ENCODE measurements at regions of chr1 and their contacts with region 1.

Region 1: DNA sequence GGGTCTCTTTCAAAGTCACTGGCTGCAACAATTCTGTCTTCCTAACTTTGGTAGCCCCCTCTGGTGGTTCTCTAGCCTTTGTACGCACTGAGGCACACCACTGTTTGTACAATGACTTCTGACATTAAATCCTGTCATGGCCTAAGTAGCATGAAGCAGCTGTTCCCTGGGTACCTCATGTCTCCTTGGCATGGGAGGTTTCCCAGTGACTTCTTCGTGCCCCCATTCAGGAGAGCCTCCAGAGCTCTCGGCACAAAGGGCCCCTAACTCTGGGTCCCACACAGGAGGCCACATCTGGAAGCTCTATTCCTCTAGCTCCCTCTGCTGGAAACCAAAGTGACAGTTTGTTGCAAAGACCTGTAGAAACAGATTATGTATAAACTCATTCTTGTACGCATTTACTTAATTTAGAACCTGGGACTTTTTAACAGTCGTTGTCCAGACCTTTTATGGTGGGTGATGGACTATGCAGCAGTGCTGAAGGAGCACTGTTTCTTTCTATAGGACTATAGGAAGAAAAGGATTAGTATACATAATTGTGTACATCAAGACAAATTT is 13.4 kb downstream of the SWT1 start:
- DNase-seq: peak; percentile 58
- H3K4me3 Mint-ChIP-seq: no peak overlapping the region
- H3K27ac Mint-ChIP-seq: peak overlapping the region; percentile 14
- H3K4me1 Mint-ChIP-seq: peaks cover 19% of the 10 kb centered on the region
- H3K27me3 Mint-ChIP-seq: no peaks in the 10 kb centered on the region

Region 2: DNA sequence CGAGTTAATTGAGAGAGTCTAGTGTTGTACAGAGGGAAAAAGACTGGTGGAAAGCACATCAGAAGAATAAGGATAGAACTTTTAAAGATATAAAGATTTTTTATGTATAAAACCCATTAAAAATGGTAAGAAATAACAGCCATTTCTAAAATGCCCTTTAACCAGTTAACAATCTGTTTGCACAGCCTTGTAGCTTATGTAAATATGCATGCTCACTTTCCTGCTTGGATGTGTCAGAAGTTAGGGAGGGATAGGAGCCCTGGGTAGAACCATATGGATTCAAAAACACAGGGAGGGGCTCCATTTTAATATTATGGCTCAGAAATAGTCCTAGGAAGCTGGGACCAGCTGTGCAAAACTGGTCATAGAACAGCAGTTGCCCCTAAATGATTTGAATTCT is 411.3 kb before region 1 on chr1:
- CTCF ChIA-PET with region 1: no interaction called
- DNase-seq: no peak
- H3K4me3 Mint-ChIP-seq: no peak overlapping the region
- H3K27ac Mint-ChIP-seq: no peak overlapping the region
- H3K4me1 Mint-ChIP-seq: peaks cover 12% of the 10 kb centered on the region
- H3K27me3 Mint-ChIP-seq: peaks cover 19% of the 10 kb centered on the region

Region 3: DNA sequence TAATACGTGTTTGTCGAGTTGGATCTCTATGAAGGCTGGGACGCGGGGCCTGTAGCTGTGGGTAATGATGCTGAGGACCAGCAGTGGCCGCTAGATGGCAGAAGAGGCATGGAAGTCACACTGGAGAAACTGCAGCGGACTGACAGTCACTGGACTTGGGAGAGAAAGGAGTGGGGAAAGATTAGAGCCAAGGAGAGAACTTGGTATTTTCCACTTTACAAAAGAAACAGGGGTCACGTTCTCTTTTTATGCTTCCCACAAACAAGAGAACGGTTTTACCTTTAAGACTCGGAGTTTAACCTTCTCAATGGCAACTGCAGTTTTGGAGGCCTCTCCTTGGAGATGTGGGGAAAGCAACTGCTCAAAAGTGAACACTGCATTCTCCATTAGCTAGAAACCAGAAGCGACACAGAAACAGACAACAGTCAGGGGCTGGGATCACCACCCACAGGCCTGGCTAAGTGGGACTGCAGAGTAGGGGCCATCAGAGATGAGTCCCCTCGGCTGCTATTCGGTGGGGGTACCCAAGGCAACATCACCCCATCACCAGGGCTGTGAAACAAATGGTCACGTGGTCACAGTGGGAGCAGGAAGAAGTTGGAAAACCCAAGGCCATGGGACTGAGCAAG is 364.6 kb before region 1 on chr1:
- CTCF ChIA-PET with region 1: interaction called, 35 read pairs
- DNase-seq: peak; percentile 88
- H3K4me3 Mint-ChIP-seq: no peak overlapping the region
- H3K27ac Mint-ChIP-seq: no peak overlapping the region
- H3K4me1 Mint-ChIP-seq: peaks cover 2% of the 10 kb centered on the region
- H3K27me3 Mint-ChIP-seq: no peaks in the 10 kb centered on the region

Region 4: GRCh38 chr1:184982002-184982954 is 188.1 kb before region 1 on chr1:
- CTCF ChIA-PET with region 1: interaction called, 22 read pairs
- DNase-seq: peak; percentile 83
- H3K4me3 Mint-ChIP-seq: no peak overlapping the region
- H3K27ac Mint-ChIP-seq: no peak overlapping the region
- H3K4me1 Mint-ChIP-seq: peaks cover 7% of the 10 kb centered on the region
- H3K27me3 Mint-ChIP-seq: peaks cover 28% of the 10 kb centered on the region

Region 5: GRCh38 chr1:185156854-185157598 is 13.3 kb before region 1 on chr1 and contains the starts of genes SWT1 and TRMT1L:
- CTCF ChIA-PET with region 1: interaction called, 61 read pairs
- DNase-seq: peak; percentile 99
- H3K4me3 Mint-ChIP-seq: peak within 1 kb of the TSS; percentile 88
- H3K27ac Mint-ChIP-seq: peak within 1 kb of the TSS; percentile 96
- H3K4me1 Mint-ChIP-seq: peaks cover 55% of the 10 kb centered on the region
- H3K27me3 Mint-ChIP-seq: no peaks in the 10 kb centered on the region

Region 6: GRCh38 chr1:185267301-185267700 is 96.9 kb after region 1 on chr1:
- CTCF ChIA-PET with region 1: no interaction called
- DNase-seq: no peak
- H3K4me3 Mint-ChIP-seq: no peak overlapping the region
- H3K27ac Mint-ChIP-seq: no peak overlapping the region
- H3K4me1 Mint-ChIP-seq: no peaks in the 10 kb centered on the region
- H3K27me3 Mint-ChIP-seq: no peaks in the 10 kb centered on the region

Region 7: GRCh38 chr1:185670187-185670627 is 499.8 kb after region 1 on chr1:
- CTCF ChIA-PET with region 1: interaction called, 14 read pairs
- DNase-seq: peak; percentile 64
- H3K4me3 Mint-ChIP-seq: no peak overlapping the region
- H3K27ac Mint-ChIP-seq: no peak overlapping the region
- H3K4me1 Mint-ChIP-seq: peaks cover 28% of the 10 kb centered on the region
- H3K27me3 Mint-ChIP-seq: no peaks in the 10 kb centered on the region

Region 8: GRCh38 chr1:185681034-185681633 is 510.8 kb after region 1 on chr1:
- CTCF ChIA-PET with region 1: interaction called, 16 read pairs
- DNase-seq: peak; percentile 33
- H3K4me3 Mint-ChIP-seq: no peak overlapping the region
- H3K27ac Mint-ChIP-seq: no peak overlapping the region
- H3K4me1 Mint-ChIP-seq: peaks cover 27% of the 10 kb centered on the region
- H3K27me3 Mint-ChIP-seq: no peaks in the 10 kb centered on the region